ENCODE measurements at regions of chr15 and their contacts with region 1.

Region 1: GRCh38 chr15:63752075-63752684 is 81.6 kb downstream of the HERC1 start:
- DNase-seq: peak in 1 of 2 experiments; percentile 61
- H3K4me3 ChIP-seq: no peak overlapping the region
- H3K4me3 Mint-ChIP-seq: no peak overlapping the region
- H3K27ac Mint-ChIP-seq: no peak overlapping the region
- H3K4me1 ChIP-seq: no peaks in the 10 kb centered on the region
- H3K4me1 Mint-ChIP-seq: no peaks in the 10 kb centered on the region
- H3K27me3 ChIP-seq: no peaks in the 10 kb centered on the region
- H3K27me3 Mint-ChIP-seq: no peaks in the 10 kb centered on the region
- CTCF ChIP-seq: peak; percentile 65 to 77

Region 2: GRCh38 chr15:63610200-63610841 is 141.9 kb before region 1 on chr15:
- CTCF ChIA-PET with region 1: interaction called, 11 read pairs
- POLR2A ChIA-PET with region 1: no interaction called
- intact Hi-C with region 1: no loop called
- DNase-seq: peak; percentile 76
- H3K4me3 ChIP-seq: no peak overlapping the region
- H3K4me3 Mint-ChIP-seq: no peak overlapping the region
- H3K27ac Mint-ChIP-seq: no peak overlapping the region
- H3K4me1 ChIP-seq: peaks cover 6% of the 10 kb centered on the region; the same call in 1 of the 2 replicates
- H3K4me1 Mint-ChIP-seq: peaks cover 10% of the 10 kb centered on the region
- H3K27me3 ChIP-seq: no peaks in the 10 kb centered on the region
- H3K27me3 Mint-ChIP-seq: no peaks in the 10 kb centered on the region
- CTCF ChIP-seq: peak; percentile 79 to 85

Region 3: DNA sequence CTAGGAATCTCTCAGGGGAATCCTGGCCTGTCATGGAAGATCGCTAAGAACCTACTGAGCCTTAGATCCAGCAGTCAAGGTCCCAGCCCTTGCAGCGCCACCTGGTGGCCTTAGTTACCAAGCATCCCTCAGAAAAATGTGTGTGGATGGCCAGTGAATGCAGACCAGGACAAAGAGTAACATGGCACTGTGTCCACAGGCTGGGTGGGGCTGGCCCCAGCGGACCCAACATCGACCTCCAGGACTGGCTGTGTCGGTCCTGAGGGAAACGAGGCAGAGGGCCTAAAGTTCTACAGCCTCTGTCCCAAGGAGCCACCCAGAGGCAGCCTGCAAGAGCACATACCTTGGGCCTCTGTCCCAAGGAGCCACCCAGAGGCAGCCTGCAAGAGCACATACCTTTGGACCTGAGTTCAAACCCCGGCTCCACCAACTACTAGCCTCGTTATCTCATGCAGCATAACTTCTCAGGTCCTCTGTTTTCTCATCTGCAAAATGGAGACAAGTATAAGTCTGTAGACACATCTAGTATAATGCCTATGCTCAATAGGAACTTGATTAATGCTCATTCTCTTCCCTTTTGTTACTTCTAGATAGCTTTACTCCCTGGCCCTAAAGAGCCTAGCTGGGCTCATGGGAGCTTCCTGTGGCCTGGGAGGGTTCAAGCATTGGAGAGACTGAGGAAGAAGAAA is 139.0 kb after region 1 on chr15:
- CTCF ChIA-PET with region 1: interaction called, 3 read pairs
- POLR2A ChIA-PET with region 1: no interaction called
- intact Hi-C with region 1: loop called (anchors 1 kb)
- DNase-seq: peak; percentile 81 to 86
- H3K4me3 ChIP-seq: no peak overlapping the region
- H3K4me3 Mint-ChIP-seq: no peak overlapping the region
- H3K27ac Mint-ChIP-seq: no peak overlapping the region
- H3K4me1 ChIP-seq: peaks cover under 1% of the 10 kb centered on the region
- H3K4me1 Mint-ChIP-seq: no peaks in the 10 kb centered on the region
- H3K27me3 ChIP-seq: no peaks in the 10 kb centered on the region
- H3K27me3 Mint-ChIP-seq: no peaks in the 10 kb centered on the region
- CTCF ChIP-seq: peak; percentile 82 to 86

Region 4: GRCh38 chr15:64046347-64047153 is 294.4 kb after region 1 on chr15 and contains the start of gene DAPK2:
- CTCF ChIA-PET with region 1: interaction called, 9 read pairs
- POLR2A ChIA-PET with region 1: no interaction called
- intact Hi-C with region 1: loop called (anchors 5 kb)
- DNase-seq: peak; percentile 51 to 84
- H3K4me3 ChIP-seq: peak within 1 kb of the TSS; percentile 35
- H3K4me3 Mint-ChIP-seq: peak within 1 kb of the TSS; percentile 67
- H3K27ac Mint-ChIP-seq: no peak within 1 kb of the TSS
- H3K4me1 ChIP-seq: peaks cover 16% of the 10 kb centered on the region
- H3K4me1 Mint-ChIP-seq: peaks cover 11% of the 10 kb centered on the region
- H3K27me3 ChIP-seq: no peaks in the 10 kb centered on the region
- H3K27me3 Mint-ChIP-seq: no peaks in the 10 kb centered on the region
- CTCF ChIP-seq: peak; percentile 73 to 75
- total RNA-seq, gene DAPK2: 1.4 and 2.2 TPM in 2 replicates

Region 5: DNA sequence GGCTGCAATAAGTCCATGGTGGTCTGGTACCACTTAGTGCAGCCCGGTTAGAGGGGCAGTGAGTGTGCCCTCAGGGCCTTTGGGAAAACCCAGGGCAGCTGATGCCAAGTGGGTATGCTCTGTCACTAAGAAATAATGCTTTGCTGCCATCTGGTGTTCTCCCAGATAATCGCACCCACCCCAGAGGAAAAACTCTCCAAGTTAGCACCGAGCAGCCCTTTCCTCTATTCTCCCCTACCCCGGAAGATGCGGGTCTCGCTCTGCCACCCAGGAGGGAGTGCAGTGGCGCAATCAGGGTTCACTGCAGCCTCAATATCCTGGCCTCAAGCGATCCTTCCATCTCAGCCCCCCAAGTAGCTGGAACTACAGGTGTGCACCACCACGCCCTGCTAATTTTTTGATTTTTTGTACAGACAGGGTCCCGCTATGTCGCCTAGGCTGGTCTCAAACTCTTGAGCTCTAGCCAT is 315.4 kb after region 1 on chr15:
- CTCF ChIA-PET with region 1: interaction called, 29 read pairs
- POLR2A ChIA-PET with region 1: no interaction called
- intact Hi-C with region 1: loop called (anchors 1 kb)
- DNase-seq: peak; percentile 58 to 77
- H3K4me3 ChIP-seq: no peak overlapping the region
- H3K4me3 Mint-ChIP-seq: no peak overlapping the region
- H3K27ac Mint-ChIP-seq: no peak overlapping the region
- H3K4me1 ChIP-seq: peaks cover 19% of the 10 kb centered on the region
- H3K4me1 Mint-ChIP-seq: peaks cover 5% of the 10 kb centered on the region
- H3K27me3 ChIP-seq: no peaks in the 10 kb centered on the region
- H3K27me3 Mint-ChIP-seq: no peaks in the 10 kb centered on the region
- CTCF ChIP-seq: peak; percentile 66 to 77

Region 6: DNA sequence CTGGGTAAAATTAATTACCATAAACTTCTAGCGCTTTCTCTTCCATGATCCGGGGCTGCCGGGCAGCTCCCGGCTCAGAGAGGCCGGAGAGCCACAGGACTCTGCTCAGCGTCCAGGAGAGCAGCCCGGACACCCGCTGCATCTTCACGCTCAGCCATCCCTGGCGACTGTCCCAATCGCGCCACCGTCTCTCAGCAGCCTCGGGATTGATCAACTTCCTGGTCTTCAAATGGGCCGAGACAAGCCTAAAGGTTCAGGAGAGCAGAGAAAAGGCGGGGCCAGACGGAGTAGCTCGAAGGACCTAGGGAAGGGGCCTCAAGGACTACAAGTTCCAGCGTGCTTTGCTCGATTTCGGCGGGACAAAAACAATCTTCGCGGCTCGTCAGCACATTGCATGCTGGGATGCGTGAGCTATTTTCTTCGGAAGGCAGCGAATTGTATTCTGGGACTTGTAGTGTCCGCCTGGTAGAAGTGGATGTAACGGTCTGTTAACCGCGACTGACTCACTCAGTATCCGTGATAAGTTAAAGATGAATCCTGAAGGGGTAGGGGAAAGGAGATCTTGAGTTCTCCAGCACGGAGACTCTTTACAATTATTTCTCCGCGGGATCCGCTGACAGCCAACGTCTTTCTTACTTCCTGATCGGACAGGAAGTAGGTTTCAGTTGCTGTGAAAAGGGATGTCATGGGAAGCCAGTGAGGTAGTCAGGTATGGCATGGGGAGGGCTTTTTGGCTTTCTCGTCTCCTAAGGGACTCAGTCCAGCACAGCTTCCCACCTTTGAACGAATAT is 341.6 kb after region 1 on chr15 and contains the start of gene CIAO2A:
- CTCF ChIA-PET with region 1: interaction called, 7 read pairs
- POLR2A ChIA-PET with region 1: no interaction called
- intact Hi-C with region 1: loop called (anchors 1 kb)
- DNase-seq: peak; percentile 94 to 98
- H3K4me3 ChIP-seq: peak within 1 kb of the TSS; percentile 74
- H3K4me3 Mint-ChIP-seq: peak within 1 kb of the TSS; percentile 99
- H3K27ac Mint-ChIP-seq: peak within 1 kb of the TSS; percentile 99
- H3K4me1 ChIP-seq: peaks cover 18% of the 10 kb centered on the region
- H3K4me1 Mint-ChIP-seq: peaks cover 18% of the 10 kb centered on the region
- H3K27me3 ChIP-seq: no peaks in the 10 kb centered on the region
- H3K27me3 Mint-ChIP-seq: no peaks in the 10 kb centered on the region
- CTCF ChIP-seq: no peak
- total RNA-seq, gene CIAO2A: 61.6 and 63.7 TPM in 2 replicates

Region 7: GRCh38 chr15:64544450-64544849 is 792.3 kb after region 1 on chr15:
- CTCF ChIA-PET with region 1: no interaction called
- POLR2A ChIA-PET with region 1: no interaction called
- intact Hi-C with region 1: no loop called
- DNase-seq: no peak
- H3K4me3 ChIP-seq: no peak overlapping the region
- H3K4me3 Mint-ChIP-seq: no peak overlapping the region
- H3K27ac Mint-ChIP-seq: no peak overlapping the region
- H3K4me1 ChIP-seq: peaks cover 6% of the 10 kb centered on the region
- H3K4me1 Mint-ChIP-seq: no peaks in the 10 kb centered on the region
- H3K27me3 ChIP-seq: no peaks in the 10 kb centered on the region
- H3K27me3 Mint-ChIP-seq: no peaks in the 10 kb centered on the region
- CTCF ChIP-seq: no peak

Measured in Caco-2 (cell line).